ENCODE measurements at regions of chr16 and their contacts with region 1.

Region 1: GRCh38 chr16:1964506-1965395 is at the start of gene RPS2:
- DNase-seq: peak; percentile 99
- ATAC-seq: peak; percentile 67 to 81
- H3K4me3 ChIP-seq: peak within 1 kb of the TSS; percentile 88
- H3K27ac ChIP-seq: peak within 1 kb of the TSS; percentile 92 to 100
- H3K4me1 ChIP-seq: peaks cover 34% of the 10 kb centered on the region
- CTCF ChIP-seq: no peak
- EP300 ChIP-seq: no peak
- POLR2A ChIP-seq: peak; percentile 97
- RAD21 ChIP-seq: no peak
- polyA plus RNA-seq, gene RPS2: 2,621 and 3,507 TPM in 2 replicates

Region 2: GRCh38 chr16:1782352-1783091 is 182.2 kb before region 1 on chr16 and contains the starts of genes NUBP2 and SPSB3:
- CTCF ChIA-PET with region 1: no interaction called
- POLR2A ChIA-PET with region 1: interaction called, 10 read pairs
- DNase-seq: peak; percentile 99 to 100
- ATAC-seq: peak; percentile 84 to 93
- H3K4me3 ChIP-seq: peak within 1 kb of the TSS; percentile 80
- H3K27ac ChIP-seq: peak within 1 kb of the TSS; percentile 82 to 92
- H3K4me1 ChIP-seq: peaks cover 22% of the 10 kb centered on the region; the same call in 2 of the 3 replicates
- CTCF ChIP-seq: no peak
- EP300 ChIP-seq: no peak
- POLR2A ChIP-seq: peak; percentile 45
- RAD21 ChIP-seq: no peak
- polyA plus RNA-seq, gene NUBP2: 21.9 and 24.7 TPM in 2 replicates
- polyA plus RNA-seq, gene SPSB3: 9.2 and 10.6 TPM in 2 replicates

Region 3: DNA sequence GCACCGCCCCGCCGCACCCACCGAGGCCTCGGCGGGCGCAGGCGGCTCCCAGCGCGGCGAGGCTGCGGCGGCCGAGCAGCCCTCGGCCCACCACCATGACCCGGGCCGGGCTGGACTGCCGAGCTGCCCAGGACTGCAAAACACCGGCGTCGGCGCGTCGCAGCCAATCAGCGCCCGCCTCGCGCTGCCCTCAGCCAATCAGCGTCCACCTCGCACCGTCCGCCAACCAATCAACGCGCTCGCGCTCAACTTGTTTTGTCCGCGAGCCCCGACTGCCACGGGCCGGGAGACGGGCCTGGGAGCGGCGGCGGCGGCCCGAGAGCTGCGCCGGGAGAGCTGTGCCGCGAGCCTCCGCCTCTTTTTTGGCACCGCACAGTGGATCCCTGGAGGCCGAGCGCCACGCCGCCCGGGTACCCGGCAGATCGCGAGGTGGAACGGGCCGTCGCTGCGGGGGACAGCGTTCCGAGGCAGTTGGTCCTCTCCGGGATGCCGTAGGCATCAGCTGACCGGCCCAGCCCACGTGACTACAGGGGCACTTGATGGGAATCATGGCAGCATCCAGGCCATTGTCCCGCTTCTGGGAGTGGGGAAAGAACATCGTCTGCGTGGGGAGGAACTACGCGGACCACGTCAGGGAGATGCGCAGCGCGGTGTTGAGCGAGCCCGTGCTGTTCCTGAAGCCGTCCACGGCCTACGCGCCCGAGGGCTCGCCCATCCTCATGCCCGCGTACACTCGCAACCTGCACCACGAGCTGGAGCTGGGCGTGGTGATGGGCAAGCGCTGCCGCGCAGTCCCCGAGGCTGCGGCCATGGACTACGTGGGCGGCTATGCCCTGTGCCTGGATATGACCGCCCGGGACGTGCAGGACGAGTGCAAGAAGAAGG is 137.8 kb before region 1 on chr16 and contains the starts of genes FAHD1 and HAGH:
- CTCF ChIA-PET with region 1: interaction called, 3 read pairs
- POLR2A ChIA-PET with region 1: interaction called, 12 read pairs
- DNase-seq: peak; percentile 98 to 99
- ATAC-seq: peak; percentile 89 to 94
- H3K4me3 ChIP-seq: peak within 1 kb of the TSS; percentile 67
- H3K27ac ChIP-seq: peak within 1 kb of the TSS; percentile 89 to 95
- H3K4me1 ChIP-seq: peaks cover 22% of the 10 kb centered on the region
- CTCF ChIP-seq: no peak
- EP300 ChIP-seq: no peak
- POLR2A ChIP-seq: peak; percentile 79
- RAD21 ChIP-seq: no peak
- polyA plus RNA-seq, gene FAHD1: 30.2 and 30.6 TPM in 2 replicates
- polyA plus RNA-seq, gene HAGH: 27.2 and 34.9 TPM in 2 replicates

Region 4: GRCh38 chr16:1950047-1950446 is 14.7 kb before region 1 on chr16:
- CTCF ChIA-PET with region 1: interaction called, 7 read pairs
- POLR2A ChIA-PET with region 1: interaction called, 18 read pairs
- DNase-seq: no peak
- ATAC-seq: peak; percentile 34 to 46
- H3K4me3 ChIP-seq: no peak overlapping the region
- H3K27ac ChIP-seq: no peak overlapping the region
- H3K4me1 ChIP-seq: no peaks in the 10 kb centered on the region
- CTCF ChIP-seq: no peak
- EP300 ChIP-seq: no peak
- POLR2A ChIP-seq: no peak
- RAD21 ChIP-seq: no peak

Region 5: GRCh38 chr16:1983544-1984346 is 19.0 kb after region 1 on chr16 and contains the start of gene GFER:
- CTCF ChIA-PET with region 1: interaction called, 11 read pairs
- POLR2A ChIA-PET with region 1: interaction called, 50 read pairs
- DNase-seq: peak; percentile 94 to 96
- ATAC-seq: peak; percentile 72 to 85
- H3K4me3 ChIP-seq: peak within 1 kb of the TSS; percentile 67
- H3K27ac ChIP-seq: peak within 1 kb of the TSS; percentile 86 to 94
- H3K4me1 ChIP-seq: peaks cover 37% of the 10 kb centered on the region
- CTCF ChIP-seq: peak; percentile 50; the same call in 2 of the 3 replicates
- EP300 ChIP-seq: no peak
- POLR2A ChIP-seq: peak; percentile 85
- RAD21 ChIP-seq: 0 out of 5 replicates have a peak, but pooled peaks of 1 of the 2 experiments have one; percentile 18
- polyA plus RNA-seq, gene GFER: 11.9 and 12.9 TPM in 2 replicates

Region 6: DNA sequence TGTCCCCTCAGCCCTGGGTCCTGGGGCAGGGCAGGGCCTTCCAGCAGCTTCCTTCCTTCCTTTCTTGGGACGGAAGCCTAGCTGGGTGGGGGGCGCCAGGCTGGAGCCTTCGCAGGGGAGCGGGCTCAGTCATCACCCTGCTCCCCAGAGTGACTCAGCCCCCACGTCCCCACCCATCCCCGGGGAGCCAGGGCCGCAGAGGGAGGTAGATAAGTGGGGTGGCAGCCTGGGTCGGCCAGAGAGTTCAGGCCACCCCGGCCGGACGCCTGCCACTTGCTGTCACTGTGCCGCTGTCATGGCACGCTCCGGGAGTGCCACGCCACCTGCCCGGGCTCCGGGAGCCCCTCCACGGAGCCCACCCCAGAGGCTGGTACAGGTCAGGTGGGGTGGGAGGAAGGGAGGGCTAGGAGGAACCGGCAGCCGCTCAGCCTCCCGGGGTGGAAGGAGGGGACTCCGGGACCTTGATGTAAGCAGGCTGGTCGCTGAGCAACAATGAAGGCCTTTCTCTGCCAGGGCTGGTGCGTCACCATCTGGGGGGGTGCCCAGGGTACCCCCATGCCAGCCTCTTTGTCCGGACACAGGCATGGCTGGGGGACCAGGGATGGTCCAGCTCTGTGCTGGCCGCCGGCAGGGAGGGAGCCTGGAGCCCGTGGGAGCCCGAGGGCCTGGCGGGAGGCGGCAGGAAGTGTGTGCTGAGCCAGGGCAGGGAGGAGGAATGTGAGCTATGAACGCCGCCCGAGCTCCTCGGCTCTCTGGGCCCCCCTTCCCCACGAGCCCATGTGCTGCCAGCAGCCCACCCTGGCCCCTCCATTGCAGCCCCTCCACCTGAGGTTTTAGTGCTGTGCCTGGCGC is 68.5 kb after region 1 on chr16:
- CTCF ChIA-PET with region 1: no interaction called
- POLR2A ChIA-PET with region 1: no interaction called
- DNase-seq: peak in 1 of 2 experiments; percentile 65
- ATAC-seq: peak; percentile 55 to 69
- H3K4me3 ChIP-seq: peak overlapping the region; percentile 25; the same call in 2 of the 3 replicates
- H3K27ac ChIP-seq: peak overlapping the region; percentile 82 to 90
- H3K4me1 ChIP-seq: peaks cover 62% of the 10 kb centered on the region
- CTCF ChIP-seq: no peak
- EP300 ChIP-seq: no peak
- POLR2A ChIP-seq: 0 out of 2 replicates have a peak, but pooled peaks have one; percentile 11
- RAD21 ChIP-seq: no peak

Measured in A549 (cell line).